Dendritic cell treated with granulocyte-macrophage colony-stimulating factor and Interleukin-4, amounts not matched to agents 40 ng/mL and 50 ng/mL, for 4 days (primary cell): ENCODE measurements at regions of chr19 and their contacts with region 1.

Region 1: DNA sequence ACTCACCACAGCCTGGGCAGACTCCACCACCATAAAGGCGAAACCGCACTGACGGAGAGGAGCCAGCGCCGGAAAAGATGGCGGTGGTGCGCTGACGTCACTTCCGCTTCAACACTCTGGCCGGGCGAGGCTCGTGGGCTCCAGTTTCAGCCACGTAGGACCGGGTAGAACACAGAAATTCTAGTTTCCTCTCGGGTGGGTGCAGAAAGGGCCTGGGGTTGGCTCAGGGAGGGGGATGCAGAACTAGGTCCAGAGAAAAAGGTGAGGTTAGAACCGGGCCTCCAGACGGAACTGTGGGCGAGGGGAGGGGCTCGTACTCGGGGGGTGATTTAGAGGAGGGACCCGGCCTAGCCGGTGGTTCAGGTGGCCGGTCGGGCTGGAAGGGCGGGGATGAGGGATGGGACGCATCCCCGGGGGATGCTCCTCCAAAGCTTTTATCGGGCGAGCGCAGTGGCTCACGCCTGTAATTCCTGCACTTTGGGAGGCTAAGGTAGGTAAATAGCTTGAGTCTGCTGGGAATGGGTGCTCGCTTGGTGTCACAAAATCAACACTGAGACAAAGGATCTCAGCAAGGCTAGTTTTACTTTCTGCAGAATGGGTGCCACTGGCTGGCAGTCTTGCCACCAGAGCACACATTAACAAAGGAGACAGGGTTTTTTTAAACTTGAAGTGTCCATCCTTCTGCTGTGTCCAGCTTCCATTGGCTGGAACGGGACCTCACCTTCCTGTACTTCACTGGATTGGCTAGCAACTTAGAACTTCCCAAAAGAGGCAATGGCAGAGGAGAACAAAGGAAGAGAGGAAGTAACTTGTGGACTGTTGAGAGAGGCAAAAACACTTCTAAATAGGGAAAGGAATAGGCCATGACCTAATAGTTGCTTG is at the start of gene ZNF561:
- H3K4me3 Mint-ChIP-seq: peak within 1 kb of the TSS; percentile 98
- H3K27ac Mint-ChIP-seq: peak within 1 kb of the TSS; percentile 100
- H3K4me1 Mint-ChIP-seq: peaks cover 38% of the 10 kb centered on the region
- H3K27me3 Mint-ChIP-seq: no peaks in the 10 kb centered on the region

Region 2: GRCh38 chr19:9309139-9309973 is 312.0 kb before region 1 on chr19 and contains the start of gene ZNF699:
- intact Hi-C with region 1: loop called (anchors 5 kb)
- H3K4me3 Mint-ChIP-seq: peak within 1 kb of the TSS; percentile 92
- H3K27ac Mint-ChIP-seq: peak within 1 kb of the TSS; percentile 98
- H3K4me1 Mint-ChIP-seq: peaks cover 22% of the 10 kb centered on the region
- H3K27me3 Mint-ChIP-seq: peaks cover 2% of the 10 kb centered on the region

Region 3: GRCh38 chr19:9584073-9584833 is 37.1 kb before region 1 on chr19 and contains the start of gene ZNF121:
- intact Hi-C with region 1: loop called (anchors 2 kb)
- H3K4me3 Mint-ChIP-seq: peak within 1 kb of the TSS; percentile 93
- H3K27ac Mint-ChIP-seq: peak within 1 kb of the TSS; percentile 98
- H3K4me1 Mint-ChIP-seq: peaks cover 18% of the 10 kb centered on the region
- H3K27me3 Mint-ChIP-seq: peaks cover 11% of the 10 kb centered on the region

Region 4: DNA sequence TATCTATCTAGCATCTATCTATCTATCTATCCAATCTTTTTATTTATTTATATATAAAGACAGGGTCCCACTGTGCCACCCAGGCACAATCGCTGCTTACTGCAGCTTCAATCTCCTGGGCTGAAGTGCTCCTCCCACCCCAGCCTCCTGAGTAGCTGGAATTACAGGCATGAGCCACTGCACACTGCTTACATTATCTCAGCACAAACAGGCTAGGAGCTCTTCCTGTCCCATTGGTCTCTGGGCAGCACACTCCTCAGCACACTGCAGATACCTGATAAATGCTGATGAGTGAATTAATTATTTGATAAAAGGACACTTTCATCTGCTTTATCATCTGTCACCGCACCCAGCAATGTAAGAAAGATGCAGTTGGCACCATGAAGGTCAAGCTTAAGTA is 37.4 kb after region 1 on chr19:
- intact Hi-C with region 1: no loop called
- H3K4me3 Mint-ChIP-seq: no peak overlapping the region
- H3K27ac Mint-ChIP-seq: no peak overlapping the region
- H3K4me1 Mint-ChIP-seq: peaks cover 7% of the 10 kb centered on the region
- H3K27me3 Mint-ChIP-seq: no peaks in the 10 kb centered on the region

Region 5: DNA sequence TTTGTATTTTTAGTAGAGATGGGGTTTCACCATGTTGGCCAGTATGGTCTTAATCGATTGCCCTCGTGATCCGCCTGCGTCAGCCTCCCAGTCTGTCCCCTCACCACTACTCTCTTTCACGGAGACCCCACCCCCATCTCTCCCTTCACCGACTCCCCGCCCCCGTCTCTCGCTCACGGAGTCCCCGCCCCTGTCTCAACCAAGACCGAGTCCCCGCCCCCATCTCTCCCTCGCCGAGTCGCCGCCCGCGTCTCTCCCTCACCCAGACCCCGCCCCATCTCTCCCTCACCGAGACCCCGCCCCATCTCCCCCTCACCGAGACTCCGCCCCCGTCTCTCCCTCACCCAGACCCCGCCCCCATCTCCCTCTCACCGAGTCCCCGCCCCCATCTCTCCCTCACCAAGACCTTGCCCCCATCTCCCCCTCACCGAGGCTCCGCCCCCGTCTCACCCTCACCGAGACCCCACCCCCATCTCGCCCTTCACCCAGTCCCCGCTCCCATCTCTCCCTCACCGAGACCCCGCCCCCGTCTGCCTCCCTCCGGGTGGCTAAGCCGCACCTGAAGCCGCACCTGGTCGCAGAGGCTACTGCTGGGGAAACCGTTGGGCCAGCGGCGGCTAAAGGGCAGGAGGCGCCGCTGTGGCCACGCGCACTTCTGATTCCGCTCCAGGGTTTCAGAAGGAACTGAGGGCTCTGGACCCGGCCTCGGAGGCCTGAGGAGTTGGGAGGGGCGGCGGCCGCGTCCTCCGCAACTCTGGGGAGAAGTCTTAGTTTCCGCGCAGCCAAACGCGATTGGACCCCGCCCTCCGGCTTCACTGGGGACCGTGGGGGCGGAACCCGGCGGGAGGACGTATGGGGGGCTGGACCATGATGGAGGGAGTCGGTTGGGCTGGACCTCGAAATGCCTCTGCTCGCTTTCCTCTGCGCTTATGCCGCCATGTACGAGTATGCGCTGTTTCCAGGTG is 164.3 kb after region 1 on chr19:
- intact Hi-C with region 1: loop called (anchors 1 kb)
- H3K4me3 Mint-ChIP-seq: peak overlapping the region; percentile 80
- H3K27ac Mint-ChIP-seq: peak overlapping the region; percentile 96
- H3K4me1 Mint-ChIP-seq: peaks cover 40% of the 10 kb centered on the region
- H3K27me3 Mint-ChIP-seq: no peaks in the 10 kb centered on the region